ENCODE measurements at regions of chr4 and their contacts with region 1.

Region 1: DNA sequence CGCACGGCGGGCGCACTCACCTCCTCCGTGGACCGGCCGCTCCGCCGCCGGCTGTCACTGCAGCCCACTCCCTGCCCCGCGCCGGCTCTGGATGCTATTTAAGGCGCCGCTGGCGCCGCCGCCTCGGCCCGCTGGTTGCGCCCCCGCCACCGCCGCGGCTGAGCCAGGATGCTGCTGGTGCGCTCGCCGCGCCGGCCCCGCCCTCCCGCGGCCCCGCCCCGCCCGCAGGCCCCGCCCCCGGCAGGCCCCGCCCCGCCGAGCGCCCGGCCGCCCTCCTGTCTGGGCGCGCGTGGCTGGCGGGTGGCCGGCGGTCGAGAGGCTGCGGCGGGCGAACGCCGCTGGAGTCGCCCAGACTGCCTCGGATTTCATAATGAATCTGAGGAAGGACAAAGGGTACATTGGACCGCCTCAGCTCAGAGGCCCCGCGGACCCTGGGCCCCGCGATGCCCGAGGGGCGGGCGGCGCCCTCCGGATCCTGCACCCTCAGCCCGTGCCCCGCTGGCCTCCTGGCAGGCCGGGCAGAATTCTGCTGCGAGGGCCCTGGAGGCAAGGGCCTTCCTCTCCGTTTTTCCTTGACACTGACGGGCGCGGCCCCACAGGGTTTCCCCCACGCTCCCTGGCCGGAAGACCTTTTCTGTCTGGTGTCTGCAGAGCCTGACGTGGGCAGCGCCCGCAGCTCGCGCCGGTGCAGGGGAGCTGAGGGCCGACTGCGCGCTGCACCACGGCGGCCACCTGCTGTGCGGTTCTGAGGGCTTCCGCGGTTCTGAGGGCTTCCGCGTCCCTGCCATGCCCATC is at the start of gene ACSL1:
- H3K4me3 Mint-ChIP-seq: peak within 1 kb of the TSS; percentile 89
- H3K27ac Mint-ChIP-seq: peak within 1 kb of the TSS; percentile 87
- H3K4me1 Mint-ChIP-seq: peaks cover 51% of the 10 kb centered on the region
- H3K27me3 Mint-ChIP-seq: peaks cover 3% of the 10 kb centered on the region

Region 2: DNA sequence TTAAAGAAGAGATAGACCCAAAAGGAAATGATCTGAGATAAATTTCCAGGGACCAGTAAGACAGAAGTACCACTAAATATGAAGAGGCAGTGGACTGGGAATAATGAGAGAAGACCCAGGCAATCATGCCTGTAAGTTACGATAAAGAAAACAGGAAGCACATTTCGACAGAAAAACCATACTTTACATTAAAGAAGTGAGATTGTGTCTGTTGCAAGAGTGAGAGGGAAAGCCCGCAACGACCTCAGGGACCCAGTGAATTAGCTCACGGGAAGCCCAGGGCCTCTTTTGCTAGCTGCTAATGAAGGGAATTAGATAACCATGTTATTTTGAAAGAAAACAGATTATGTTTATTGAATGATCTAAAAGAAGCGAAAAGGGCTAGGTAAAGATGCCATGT is 28.6 kb after region 1 on chr4:
- intact Hi-C with region 1: loop called (anchors 1 kb)
- H3K4me3 Mint-ChIP-seq: peak overlapping the region; percentile 9
- H3K27ac Mint-ChIP-seq: peak overlapping the region; percentile 71
- H3K4me1 Mint-ChIP-seq: peaks cover 31% of the 10 kb centered on the region
- H3K27me3 Mint-ChIP-seq: no peaks in the 10 kb centered on the region